ENCODE measurements at regions of chr3 and their contacts with region 1.

Region 1: DNA sequence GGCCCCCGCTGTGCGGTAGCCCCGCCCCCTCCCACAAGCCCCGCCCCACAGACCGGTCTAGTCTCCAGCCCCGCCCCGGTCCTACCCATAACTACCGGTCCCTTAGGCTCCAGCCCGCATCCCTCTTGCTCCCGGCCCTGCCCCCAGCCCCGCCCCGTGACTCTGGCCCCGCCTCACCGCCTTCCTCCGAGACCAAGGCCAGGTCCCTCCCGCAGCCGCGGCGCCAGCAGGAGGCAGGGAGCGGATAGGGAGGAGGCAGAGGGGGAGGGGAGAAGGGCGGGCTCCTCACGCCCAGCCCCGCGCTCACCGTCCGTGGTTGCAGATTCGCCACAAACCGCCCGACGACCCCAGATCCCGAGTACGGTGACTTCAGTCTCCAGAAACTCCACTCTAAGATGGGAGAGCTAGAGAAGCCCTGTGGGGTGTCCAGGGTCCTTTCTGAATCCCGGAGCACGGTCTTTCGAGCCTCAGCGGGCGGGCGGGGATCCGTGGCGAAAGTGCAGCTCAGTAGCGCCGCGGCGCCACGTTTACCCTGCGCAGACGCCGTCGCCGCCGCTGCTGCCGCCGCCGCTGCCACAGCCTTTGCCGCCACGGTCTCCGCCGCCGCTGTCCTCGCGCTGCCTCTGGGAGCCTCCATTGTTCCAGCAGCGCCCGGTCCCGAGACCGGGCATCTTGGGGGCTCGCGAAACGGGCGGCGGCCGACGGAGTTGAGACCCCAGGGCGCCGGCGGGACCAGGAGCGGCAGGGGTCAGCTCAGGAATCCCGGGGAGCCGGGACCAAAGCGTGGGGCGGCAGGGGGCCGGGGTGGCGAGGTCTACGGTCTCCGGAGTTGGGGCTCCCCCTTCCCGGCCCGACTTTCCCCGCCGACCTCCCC is at the start of gene BRPF1:
- DNase-seq: peak; percentile 99 to 100 (median 99)
- H3K4me3 ChIP-seq: peak within 1 kb of the TSS; percentile 81 to 94 (median 85)
- H3K4me3 Mint-ChIP-seq: peak within 1 kb of the TSS; percentile 87 to 95
- H3K27ac ChIP-seq: peak within 1 kb of the TSS; percentile 90 to 96
- H3K27ac Mint-ChIP-seq: peak within 1 kb of the TSS; percentile 91 to 99 (median 97)
- H3K4me1 ChIP-seq: peaks cover 50 to 59% of the 10 kb centered on the region in 2 donors
- H3K4me1 Mint-ChIP-seq: peaks cover 57% of the 10 kb centered on the region
- H3K27me3 ChIP-seq: no peaks in the 10 kb centered on the region
- H3K27me3 Mint-ChIP-seq: peaks cover 0 to 1% (median 0%) of the 10 kb centered on the region in 3 donors
- CTCF ChIP-seq: no peak
- polyA plus RNA-seq, gene BRPF1: 5.1 to 22.5 (median 10.4) TPM

Region 2: DNA sequence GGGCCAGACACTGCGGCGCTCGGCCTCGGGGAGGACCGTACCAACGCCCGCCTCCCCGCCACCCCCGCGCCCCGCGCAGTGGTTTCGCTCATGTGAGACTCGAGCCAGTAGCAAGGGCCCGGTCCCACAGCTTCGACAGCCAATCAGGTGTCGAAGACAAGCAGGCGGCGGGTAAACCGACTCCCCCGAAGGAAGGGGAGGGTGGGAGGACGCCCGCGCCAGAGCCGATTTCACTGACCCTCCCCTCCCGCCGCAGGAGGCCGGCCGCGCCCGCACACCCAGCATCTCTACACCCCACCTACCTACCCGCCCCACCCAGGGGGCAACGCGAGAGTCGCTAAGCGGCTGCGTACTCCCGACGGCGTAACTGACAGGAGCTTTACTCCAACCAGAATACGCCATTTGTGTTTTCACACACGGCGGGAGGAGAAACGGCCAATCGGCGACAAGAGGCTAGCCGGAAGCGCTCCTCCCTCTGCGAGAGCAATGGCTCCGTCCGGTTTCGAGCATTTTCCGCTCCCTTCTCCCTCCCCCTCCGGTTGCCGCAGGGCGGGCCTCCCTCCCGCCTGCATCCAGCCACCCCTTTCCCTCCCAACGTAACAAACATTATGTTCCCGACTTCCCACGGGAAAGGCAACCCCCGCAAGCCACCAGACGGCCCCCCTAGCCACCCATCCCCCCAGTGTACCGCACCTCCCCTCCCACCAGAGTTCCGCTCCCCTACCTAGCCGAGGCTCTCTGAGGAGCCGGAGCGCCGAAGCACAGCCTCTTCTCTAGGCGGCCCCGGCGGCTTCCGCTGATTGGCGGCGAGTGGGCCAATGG is 334.5 kb before region 1 on chr3:
- intact Hi-C with region 1: loop called in 1 of 2 experiments (anchors 5 kb)
- DNase-seq: peak; percentile 96 to 98 (median 96)
- H3K4me3 ChIP-seq: peak overlapping the region; percentile 49 to 86 (median 75)
- H3K4me3 Mint-ChIP-seq: peak overlapping the region; percentile 91 to 92
- H3K27ac ChIP-seq: peak overlapping the region; percentile 96 to 99
- H3K27ac Mint-ChIP-seq: peak overlapping the region; percentile 98 to 100 (median 99)
- H3K4me1 ChIP-seq: peaks cover 27 to 60% of the 10 kb centered on the region in 2 donors
- H3K4me1 Mint-ChIP-seq: peaks cover 59% of the 10 kb centered on the region
- H3K27me3 ChIP-seq: no peaks in the 10 kb centered on the region
- H3K27me3 Mint-ChIP-seq: peaks cover 0 to 1% (median 0%) of the 10 kb centered on the region in 3 donors
- CTCF ChIP-seq: no peak

Region 3: DNA sequence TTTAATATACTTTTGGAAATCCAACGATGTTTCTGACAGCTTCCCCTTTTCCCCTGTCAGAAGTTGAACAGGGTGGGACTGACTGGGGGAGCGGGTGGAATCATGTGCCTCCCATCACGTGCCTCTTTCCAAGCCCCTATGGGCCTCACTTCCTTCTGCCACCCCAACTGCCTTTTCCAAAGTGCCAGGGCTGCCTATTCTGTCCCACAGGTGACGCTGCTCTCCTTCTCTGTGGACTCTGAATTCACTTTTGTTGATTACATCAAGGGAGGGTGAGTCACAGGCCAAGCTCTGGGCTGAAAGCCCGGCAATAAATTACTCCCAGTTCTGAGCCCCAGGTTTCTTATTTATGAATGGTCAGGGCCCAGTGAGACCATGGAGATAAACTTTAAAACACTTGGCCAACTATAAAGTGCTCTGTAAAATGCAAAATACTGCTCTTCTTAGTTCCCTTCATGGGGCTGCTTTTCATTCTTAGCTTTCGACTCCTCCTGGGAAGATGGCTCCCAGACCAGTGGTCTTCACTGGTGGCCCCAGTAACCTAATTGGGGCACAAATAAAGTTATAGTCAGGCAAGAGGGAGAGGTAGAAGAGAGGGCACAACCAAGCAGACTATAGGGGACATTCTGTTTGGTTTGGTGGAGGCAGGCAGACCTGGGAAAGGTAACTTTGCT is 15.5 kb before region 1 on chr3:
- intact Hi-C with region 1: loop called in 1 of 2 experiments (anchors 1 kb)
- DNase-seq: peak; percentile 86 to 96 (median 92)
- H3K4me3 ChIP-seq: peak overlapping the region in 1 of 3 experiments; percentile 49
- H3K4me3 Mint-ChIP-seq: peak overlapping the region in 1 of 2 donors; percentile 13
- H3K27ac ChIP-seq: peak overlapping the region; percentile 51 to 77
- H3K27ac Mint-ChIP-seq: peak overlapping the region; percentile 81 to 93 (median 91)
- H3K4me1 ChIP-seq: peaks cover 29 to 38% of the 10 kb centered on the region in 2 donors
- H3K4me1 Mint-ChIP-seq: peaks cover 37% of the 10 kb centered on the region
- H3K27me3 ChIP-seq: no peaks in the 10 kb centered on the region
- H3K27me3 Mint-ChIP-seq: peaks cover 0 to 2% (median 0%) of the 10 kb centered on the region in 3 donors
- CTCF ChIP-seq: peak; percentile 88

Region 4: DNA sequence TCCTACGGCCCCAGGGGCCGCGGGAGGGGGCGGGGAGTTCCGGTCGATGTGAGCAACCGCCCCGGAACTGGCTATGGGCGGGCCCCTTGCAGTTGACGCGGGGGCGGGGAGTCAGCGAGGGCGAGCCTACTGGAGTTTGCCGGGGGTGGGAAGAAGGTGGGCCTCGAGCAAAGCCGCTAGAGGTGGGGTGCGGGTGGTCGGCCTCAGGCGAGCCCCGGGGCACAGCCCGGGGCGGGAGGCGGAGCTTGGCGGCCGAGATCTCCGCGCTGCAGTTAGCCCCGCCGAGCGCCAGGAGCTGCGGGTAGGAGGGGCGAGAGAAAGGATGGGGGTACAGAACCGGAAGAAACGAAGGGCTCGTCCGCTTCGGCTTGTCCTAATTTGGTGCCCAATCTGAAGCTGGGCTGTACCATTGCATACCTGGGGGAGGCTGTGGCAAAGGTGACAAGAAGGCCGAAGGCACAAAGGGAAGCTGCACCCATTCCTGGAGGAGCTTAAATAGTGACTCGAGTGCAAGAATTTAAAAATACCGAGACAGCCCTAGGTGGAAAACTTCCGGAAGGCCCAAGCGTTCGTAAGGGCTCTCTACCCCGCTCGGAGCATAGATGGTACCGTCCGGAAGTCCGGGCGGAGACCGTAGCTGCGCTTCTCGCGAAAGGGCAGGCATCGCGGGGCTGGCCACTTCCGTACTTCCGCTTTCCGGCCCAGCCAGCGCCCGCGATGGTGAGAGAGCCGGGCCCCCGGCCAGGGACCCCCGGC is 61.1 kb after region 1 on chr3 and contains the starts of genes ARPC4 and TADA3:
- intact Hi-C with region 1: loop called (anchors 2 to 5 kb)
- DNase-seq: peak; percentile 93 to 95 (median 94)
- H3K4me3 ChIP-seq: peak within 1 kb of the TSS; percentile 76 to 96 (median 77)
- H3K4me3 Mint-ChIP-seq: peak within 1 kb of the TSS; percentile 93 to 99
- H3K27ac ChIP-seq: peak within 1 kb of the TSS; percentile 91 to 97
- H3K27ac Mint-ChIP-seq: peak within 1 kb of the TSS; percentile 87 to 100 (median 99)
- H3K4me1 ChIP-seq: peaks cover 39 to 42% of the 10 kb centered on the region in 2 donors
- H3K4me1 Mint-ChIP-seq: peaks cover 38% of the 10 kb centered on the region
- H3K27me3 ChIP-seq: no peaks in the 10 kb centered on the region
- H3K27me3 Mint-ChIP-seq: peaks cover 0 to 1% (median 0%) of the 10 kb centered on the region in 3 donors
- CTCF ChIP-seq: no peak
- polyA plus RNA-seq, gene ARPC4: 211 to 390 (median 389) TPM
- polyA plus RNA-seq, gene TADA3: 36.1 to 47.2 (median 46.9) TPM

Region 5: GRCh38 chr3:10026084-10026890 is 294.8 kb after region 1 on chr3 and contains the start of gene FANCD2:
- intact Hi-C with region 1: loop called in 1 of 2 experiments (anchors 2 kb)
- DNase-seq: peak; percentile 81 to 92 (median 91)
- H3K4me3 ChIP-seq: peak within 1 kb of the TSS; percentile 81 to 95 (median 92)
- H3K4me3 Mint-ChIP-seq: peak within 1 kb of the TSS; percentile 92 to 95
- H3K27ac ChIP-seq: peak within 1 kb of the TSS; percentile 76 to 96
- H3K27ac Mint-ChIP-seq: peak within 1 kb of the TSS; percentile 95 to 97 (median 97)
- H3K4me1 ChIP-seq: peaks cover 32 to 38% of the 10 kb centered on the region in 2 donors
- H3K4me1 Mint-ChIP-seq: peaks cover 32% of the 10 kb centered on the region
- H3K27me3 ChIP-seq: no peaks in the 10 kb centered on the region
- H3K27me3 Mint-ChIP-seq: no peaks in the 10 kb centered on the region
- CTCF ChIP-seq: no peak
- polyA plus RNA-seq, gene FANCD2: 1.3 to 11.6 (median 2.4) TPM